Breast epithelium (tissue), 4 donors: ENCODE measurements at regions of chr19 and their contacts with region 1.

Region 1: DNA sequence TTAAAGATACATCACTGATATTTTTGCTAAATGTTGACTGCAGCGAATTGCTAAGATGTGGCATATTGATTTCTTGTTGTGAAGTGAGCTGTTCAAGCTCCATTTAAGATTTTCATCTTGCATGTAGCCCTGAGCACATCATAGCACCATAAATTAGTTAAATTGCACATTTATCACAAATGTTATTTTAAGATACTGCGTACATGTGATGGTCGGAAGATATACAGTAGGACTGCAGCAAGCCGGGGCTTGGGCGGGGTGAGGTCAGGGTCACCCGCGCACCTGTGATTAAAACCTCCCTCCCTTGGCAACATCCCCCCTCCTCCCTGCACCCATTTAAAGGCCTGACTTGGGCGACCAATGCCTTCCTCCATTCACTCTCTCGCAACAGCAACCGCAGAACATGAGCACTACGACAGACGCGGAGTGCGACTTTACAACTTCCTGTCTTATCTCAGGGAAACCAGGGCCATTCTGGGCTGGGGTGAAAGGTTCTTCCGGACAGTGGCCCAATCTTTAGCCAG is 76.6 kb downstream of the TSHZ3 start:
- DNase-seq: no peak
- H3K4me3 ChIP-seq: no peak overlapping the region
- H3K27ac ChIP-seq: no peak overlapping the region
- H3K4me1 ChIP-seq: no peaks in the 10 kb centered on the region
- H3K27me3 ChIP-seq: no peaks in the 10 kb centered on the region
- CTCF ChIP-seq: no peak
- POLR2A ChIP-seq: no peak

Region 2: DNA sequence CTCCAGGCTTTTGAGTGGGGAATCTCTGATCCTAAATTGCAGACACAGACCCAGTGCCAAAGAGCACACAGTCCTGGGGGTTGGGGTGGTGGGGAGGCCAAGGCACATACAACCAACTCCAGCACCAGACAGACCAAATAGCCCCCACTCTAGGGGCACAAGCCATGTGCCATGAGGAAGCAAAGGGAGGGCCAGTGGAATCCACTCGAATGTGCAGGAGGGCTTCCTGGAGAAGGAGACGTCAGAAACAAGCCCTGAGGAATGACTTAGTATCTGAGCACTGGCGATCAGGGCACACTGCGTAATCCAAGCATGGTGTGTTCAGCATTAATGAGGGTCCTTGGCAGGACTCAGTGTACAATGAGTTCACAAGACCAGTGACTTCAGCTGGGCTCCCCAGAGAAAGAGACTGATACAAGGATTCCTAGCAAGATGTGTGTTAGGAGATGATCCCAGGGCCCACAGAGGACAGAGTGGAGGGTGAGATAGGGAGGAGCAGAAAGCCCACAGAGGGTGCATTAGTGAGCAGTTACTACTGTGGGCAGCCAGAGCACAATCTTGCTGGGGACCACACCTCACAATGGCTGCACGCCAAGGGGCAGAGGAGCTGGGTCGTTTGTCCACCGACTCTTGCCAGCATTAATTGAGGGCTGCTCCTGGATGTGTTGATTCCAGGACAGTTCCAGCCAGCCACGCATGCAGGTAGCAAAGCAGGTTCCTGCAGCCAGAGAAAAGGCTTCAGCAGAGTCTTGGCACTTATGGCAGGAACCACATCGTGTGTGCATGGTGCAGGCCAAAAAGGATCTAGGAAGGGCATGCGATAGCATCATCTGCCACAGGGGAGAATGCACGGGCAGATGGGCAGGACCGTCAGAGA is 1899.5 kb before region 1 on chr19:
- intact Hi-C with region 1: no loop called
- DNase-seq: no peak
- H3K4me3 ChIP-seq: no peak overlapping the region
- H3K27ac ChIP-seq: no peak overlapping the region
- H3K4me1 ChIP-seq: no peaks in the 10 kb centered on the region
- H3K27me3 ChIP-seq: peaks cover 0 to 5% of the 10 kb centered on the region in 2 donors
- CTCF ChIP-seq: no peak
- POLR2A ChIP-seq: no peak

Region 3: GRCh38 chr19:31220541-31220940 is 52.1 kb before region 1 on chr19:
- intact Hi-C with region 1: loop called (anchors 2 kb)
- DNase-seq: no peak
- H3K4me3 ChIP-seq: no peak overlapping the region
- H3K27ac ChIP-seq: no peak overlapping the region
- H3K4me1 ChIP-seq: no peaks in the 10 kb centered on the region
- H3K27me3 ChIP-seq: no peaks in the 10 kb centered on the region
- CTCF ChIP-seq: no peak
- POLR2A ChIP-seq: no peak

Region 4: DNA sequence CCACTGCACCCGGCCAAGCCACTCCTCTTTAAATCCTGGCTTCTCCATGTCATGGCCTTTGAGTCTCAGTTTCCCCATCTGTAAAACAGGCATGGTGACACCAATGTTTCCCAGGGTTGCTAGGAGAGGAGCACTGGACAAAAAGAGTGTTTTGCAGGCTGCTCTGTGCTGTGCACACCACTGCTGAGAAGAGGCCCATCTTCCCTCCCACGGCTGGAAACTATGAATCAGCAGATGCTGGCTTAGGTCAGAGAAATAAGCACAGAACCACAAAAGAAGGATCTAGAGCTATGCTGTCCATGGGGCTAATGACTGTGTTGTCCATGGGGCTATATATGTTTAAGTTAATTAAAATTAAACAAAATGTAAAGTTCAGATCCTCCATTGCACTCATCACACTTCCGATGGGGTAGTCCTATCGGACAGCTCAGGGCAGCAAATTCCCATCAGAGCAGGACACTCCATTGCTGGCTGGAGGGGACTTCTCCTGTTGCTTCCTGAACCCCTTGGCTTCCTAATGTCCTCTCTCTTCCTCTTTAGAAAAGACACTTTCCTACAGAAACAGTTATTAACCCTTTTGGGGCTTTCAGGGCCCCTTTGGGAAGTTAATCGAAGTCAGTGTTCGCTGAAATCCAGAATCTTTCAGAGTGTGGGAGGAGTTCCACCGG is 39.5 kb after region 1 on chr19:
- intact Hi-C with region 1: no loop called
- DNase-seq: no peak
- H3K4me3 ChIP-seq: no peak overlapping the region
- H3K27ac ChIP-seq: peak overlapping the region in 1 of 2 donors; percentile 63
- H3K4me1 ChIP-seq: peaks cover 0 to 6% of the 10 kb centered on the region in 2 donors
- H3K27me3 ChIP-seq: no peaks in the 10 kb centered on the region
- CTCF ChIP-seq: no peak
- POLR2A ChIP-seq: no peak